Activated CD4-positive, alpha-beta T cell treated with anti-CD3 and anti-CD28 coated beads for 36 hours (primary cell): ENCODE measurements at regions of chr4 and their contacts with region 1.

Region 1: DNA sequence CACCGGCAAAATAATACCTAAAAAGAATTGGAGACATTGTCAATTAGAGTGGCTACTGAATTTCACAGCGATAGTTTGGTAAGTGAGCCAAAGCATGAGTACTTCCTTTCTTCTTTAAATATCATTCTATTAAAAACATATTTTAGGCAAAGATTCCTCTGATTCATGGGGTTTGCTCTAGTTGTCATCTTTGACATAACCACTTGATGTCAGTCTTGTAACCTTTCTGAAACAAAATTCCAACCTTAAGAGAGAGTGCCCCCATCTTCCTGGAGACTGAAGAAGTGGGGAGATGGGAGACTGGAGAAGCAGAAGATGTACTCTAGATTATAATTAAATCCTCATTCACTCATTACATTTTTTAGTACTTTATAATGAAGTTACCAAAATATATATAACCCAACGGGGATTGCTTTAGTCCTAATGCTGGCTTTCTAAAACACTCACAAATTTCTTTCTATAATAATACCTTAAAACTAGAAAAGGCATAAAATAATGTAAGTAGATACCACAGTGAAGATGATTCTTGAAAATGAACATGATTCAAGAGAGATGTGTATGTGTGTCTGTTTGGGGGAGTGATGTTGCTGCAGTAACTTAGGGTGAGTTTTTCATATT is 96.4 kb downstream of the EMCN start:
- DNase-seq: no peak
- ATAC-seq: no peak
- H3K4me3 Mint-ChIP-seq: no peak overlapping the region
- H3K27ac Mint-ChIP-seq: no peak overlapping the region
- H3K4me1 Mint-ChIP-seq: no peaks in the 10 kb centered on the region
- H3K27me3 Mint-ChIP-seq: peaks cover 2% of the 10 kb centered on the region

Region 2: GRCh38 chr4:99166544-99166943 is 1254.9 kb before region 1 on chr4:
- CTCF ChIA-PET with region 1: no interaction called
- POLR2A ChIA-PET with region 1: no interaction called
- intact Hi-C with region 1: no loop called
- DNase-seq: no peak
- ATAC-seq: no peak
- H3K4me3 Mint-ChIP-seq: no peak overlapping the region
- H3K27ac Mint-ChIP-seq: no peak overlapping the region
- H3K4me1 Mint-ChIP-seq: no peaks in the 10 kb centered on the region
- H3K27me3 Mint-ChIP-seq: no peaks in the 10 kb centered on the region

Region 3: DNA sequence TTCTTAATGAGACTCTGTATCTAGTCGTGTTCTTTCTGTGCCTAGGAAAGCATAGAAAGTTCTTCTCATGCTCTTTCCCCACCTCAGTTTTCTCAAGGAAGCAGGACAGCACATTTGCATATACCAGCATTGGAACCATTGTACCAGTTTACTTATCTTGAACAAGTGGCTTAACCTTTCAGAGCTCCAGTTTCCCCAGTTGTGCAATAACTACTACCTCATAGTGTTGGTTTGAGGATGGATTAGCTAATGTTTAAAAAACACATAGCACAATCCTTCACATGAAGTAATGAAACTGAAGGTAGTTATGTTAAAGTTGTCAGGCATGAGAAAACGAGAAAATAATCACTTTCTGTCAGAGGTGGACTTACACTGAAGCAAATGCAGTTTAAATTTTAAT is 379.2 kb before region 1 on chr4:
- CTCF ChIA-PET with region 1: no interaction called
- POLR2A ChIA-PET with region 1: no interaction called
- intact Hi-C with region 1: no loop called
- DNase-seq: no peak
- ATAC-seq: no peak
- H3K4me3 Mint-ChIP-seq: no peak overlapping the region
- H3K27ac Mint-ChIP-seq: no peak overlapping the region
- H3K4me1 Mint-ChIP-seq: no peaks in the 10 kb centered on the region
- H3K27me3 Mint-ChIP-seq: peaks cover 1% of the 10 kb centered on the region

Region 4: GRCh38 chr4:100742045-100742444 is 320.6 kb after region 1 on chr4:
- CTCF ChIA-PET with region 1: no interaction called
- POLR2A ChIA-PET with region 1: no interaction called
- intact Hi-C with region 1: loop called in 1 of 2 experiments (anchors 2 kb)
- DNase-seq: no peak
- ATAC-seq: no peak
- H3K4me3 Mint-ChIP-seq: no peak overlapping the region
- H3K27ac Mint-ChIP-seq: no peak overlapping the region
- H3K4me1 Mint-ChIP-seq: no peaks in the 10 kb centered on the region
- H3K27me3 Mint-ChIP-seq: no peaks in the 10 kb centered on the region

Region 5: GRCh38 chr4:101730291-101731117 is 1309.0 kb after region 1 on chr4:
- CTCF ChIA-PET with region 1: no interaction called
- POLR2A ChIA-PET with region 1: no interaction called
- intact Hi-C with region 1: loop called in 1 of 2 experiments (anchors 5 kb)
- DNase-seq: peak; percentile 74
- ATAC-seq: peak; percentile 83
- H3K4me3 Mint-ChIP-seq: no peak overlapping the region
- H3K27ac Mint-ChIP-seq: no peak overlapping the region
- H3K4me1 Mint-ChIP-seq: no peaks in the 10 kb centered on the region
- H3K27me3 Mint-ChIP-seq: peaks cover 3% of the 10 kb centered on the region